Activated CD8-positive, alpha-beta memory T cell treated with anti-CD3 and anti-CD28 coated beads, Interleukin-2, amount 10 ng/mL, durations not matched to agents 7 days and 5 days (primary cell): ENCODE measurements at regions of chr13 and their contacts with region 1.

Region 1: DNA sequence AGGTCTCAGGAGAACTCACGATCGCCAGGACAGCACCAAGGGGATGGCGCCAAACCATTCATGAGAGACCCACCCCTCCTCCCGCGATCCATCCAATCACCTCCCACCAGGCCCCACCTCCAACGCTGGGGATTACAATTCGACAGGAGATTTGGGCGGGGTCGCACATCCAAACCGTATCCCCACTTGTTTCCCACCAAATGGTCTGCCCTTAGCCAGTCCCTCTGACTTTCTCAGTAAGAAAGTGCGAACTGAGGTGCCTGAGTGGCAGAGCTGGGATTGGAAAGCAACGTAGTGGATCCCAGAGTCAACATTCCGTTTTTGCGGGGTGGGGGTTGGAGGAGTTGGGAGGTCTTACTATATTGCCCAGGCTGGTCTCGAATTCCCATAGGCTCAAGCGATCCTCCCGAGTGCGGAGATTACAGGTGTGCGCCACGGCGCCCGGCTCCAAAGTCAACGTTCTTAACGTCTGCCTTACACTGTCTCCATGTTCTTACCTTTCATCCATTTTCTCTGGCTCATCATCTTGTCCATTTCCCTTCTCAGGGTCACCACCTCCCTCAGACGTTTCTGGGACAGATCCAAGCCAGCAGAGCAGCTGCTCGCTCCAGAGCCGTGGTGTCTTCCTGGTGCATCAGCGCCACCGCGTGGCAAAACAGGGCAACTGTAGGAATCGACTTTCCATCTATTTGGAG is 102.7 kb upstream of the ABCC4 start:
- DNase-seq: peak; percentile 80
- ATAC-seq: peak; percentile 94
- H3K4me3 Mint-ChIP-seq: peak overlapping the region; percentile 72
- H3K27ac Mint-ChIP-seq: no peak overlapping the region
- H3K4me1 Mint-ChIP-seq: peaks cover 5% of the 10 kb centered on the region
- H3K27me3 Mint-ChIP-seq: peaks cover 8% of the 10 kb centered on the region

Region 2: DNA sequence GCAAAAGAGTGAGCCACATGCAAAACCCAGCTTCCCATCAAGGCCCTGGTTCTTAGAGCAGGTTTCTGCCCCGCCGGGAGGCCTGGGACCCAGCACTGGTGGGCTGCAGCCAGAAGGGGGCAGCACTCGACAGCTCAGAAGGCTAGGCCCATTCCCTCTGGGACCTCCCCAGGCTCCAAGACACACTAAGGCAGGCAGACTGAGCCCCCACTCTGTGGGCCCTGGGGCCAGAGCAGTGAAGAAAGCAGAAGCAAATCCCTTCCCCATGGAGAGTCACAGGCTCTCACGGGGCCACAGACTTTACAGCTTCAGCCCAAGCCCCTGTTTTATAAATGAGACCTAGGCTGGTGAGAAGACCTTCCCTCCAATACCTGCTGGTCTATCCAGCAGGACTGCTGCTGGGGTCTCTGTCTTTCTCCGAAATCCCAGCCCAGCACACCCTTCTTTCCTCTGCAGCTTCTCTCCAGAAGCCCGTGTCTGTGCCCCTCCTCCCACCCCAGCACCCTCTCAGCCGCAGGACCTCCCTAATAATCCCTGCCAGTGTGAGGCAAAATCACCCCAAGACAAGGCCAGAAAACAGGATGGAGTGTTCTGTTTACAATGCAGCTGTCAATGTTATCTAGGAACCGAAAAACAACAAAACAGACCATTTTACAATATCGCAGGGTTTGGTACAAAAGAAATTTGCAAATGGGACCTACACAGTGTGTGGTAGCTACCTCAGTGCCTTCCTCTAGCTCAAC is 212.0 kb before region 1 on chr13:
- CTCF ChIA-PET with region 1: interaction called, 234 read pairs
- DNase-seq: peak; percentile 74
- ATAC-seq: peak; percentile 89
- H3K4me3 Mint-ChIP-seq: no peak overlapping the region
- H3K27ac Mint-ChIP-seq: no peak overlapping the region
- H3K4me1 Mint-ChIP-seq: peaks cover 8% of the 10 kb centered on the region
- H3K27me3 Mint-ChIP-seq: no peaks in the 10 kb centered on the region

Region 3: DNA sequence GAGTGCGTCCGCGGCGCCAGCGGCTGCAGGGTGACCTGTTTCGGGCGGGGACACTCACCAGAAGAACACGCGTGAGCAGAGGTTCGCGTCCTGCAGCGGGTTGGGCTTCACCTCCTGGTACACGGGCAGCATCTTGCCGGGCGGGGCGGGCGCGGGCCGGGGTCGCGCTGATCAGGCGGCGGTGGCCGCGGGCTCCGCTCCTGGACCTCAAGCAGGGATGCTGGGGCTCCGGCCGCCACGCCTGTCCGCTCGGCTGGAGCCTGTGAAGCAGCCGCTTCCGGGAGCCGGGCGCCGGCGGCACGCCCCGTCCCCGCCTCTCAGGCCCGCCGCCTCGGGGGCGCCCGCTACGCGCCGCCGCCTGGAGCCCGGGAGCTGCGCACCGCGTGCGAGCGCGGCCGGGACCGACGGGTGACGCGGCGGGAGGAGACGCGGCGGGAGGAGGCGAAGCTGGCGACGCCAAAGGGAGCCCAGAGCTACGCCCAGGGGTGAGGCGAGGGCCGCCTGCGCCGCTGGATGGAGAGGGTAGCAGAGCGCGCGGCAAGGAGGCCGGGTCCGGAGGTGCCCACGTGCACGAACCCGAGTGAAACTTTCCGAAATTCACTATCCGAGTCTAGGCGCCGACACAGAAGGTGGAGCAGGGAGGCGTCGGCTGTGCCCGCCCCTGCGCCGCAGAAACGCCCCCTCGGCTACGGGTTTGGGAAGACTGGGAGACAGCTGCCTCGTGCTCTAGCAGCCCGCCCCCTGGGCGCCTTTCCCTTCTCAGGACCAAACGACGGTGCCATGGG is 102.6 kb before region 1 on chr13 and contains the start of gene ABCC4:
- CTCF ChIA-PET with region 1: interaction called, 28 read pairs
- DNase-seq: peak; percentile 66
- ATAC-seq: peak; percentile 95
- H3K4me3 Mint-ChIP-seq: peak within 1 kb of the TSS; percentile 84
- H3K27ac Mint-ChIP-seq: no peak within 1 kb of the TSS
- H3K4me1 Mint-ChIP-seq: peaks cover 22% of the 10 kb centered on the region
- H3K27me3 Mint-ChIP-seq: peaks cover 12% of the 10 kb centered on the region
- total RNA-seq, gene ABCC4: 6.4 to 7.7 TPM

Region 4: GRCh38 chr13:95378603-95379002 is 25.4 kb before region 1 on chr13:
- CTCF ChIA-PET with region 1: interaction called, 29 read pairs
- DNase-seq: no peak
- ATAC-seq: no peak
- H3K4me3 Mint-ChIP-seq: no peak overlapping the region
- H3K27ac Mint-ChIP-seq: no peak overlapping the region
- H3K4me1 Mint-ChIP-seq: peaks cover 4% of the 10 kb centered on the region
- H3K27me3 Mint-ChIP-seq: peaks cover 7% of the 10 kb centered on the region

Region 5: DNA sequence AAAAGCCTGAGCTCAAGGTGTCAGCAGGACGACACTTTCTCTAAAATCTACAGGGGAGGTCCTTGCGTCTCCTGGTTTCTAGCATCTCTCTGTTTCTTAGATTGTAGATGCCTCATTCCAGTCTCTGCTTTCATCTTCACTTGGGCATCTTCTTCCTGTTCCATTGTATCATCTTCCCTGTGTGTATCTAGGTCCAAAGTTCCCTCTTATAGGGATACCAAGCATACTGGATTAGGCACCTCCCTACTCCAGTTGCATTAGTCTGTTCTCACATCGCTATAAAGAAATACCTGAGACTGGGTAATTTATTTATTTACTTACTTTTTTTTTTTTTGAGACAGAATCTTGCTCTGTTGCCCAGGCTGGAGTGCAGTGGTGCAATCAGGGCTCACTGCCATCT is 11.4 kb before region 1 on chr13:
- CTCF ChIA-PET with region 1: interaction called, 11 read pairs
- DNase-seq: no peak
- ATAC-seq: no peak
- H3K4me3 Mint-ChIP-seq: no peak overlapping the region
- H3K27ac Mint-ChIP-seq: no peak overlapping the region
- H3K4me1 Mint-ChIP-seq: no peaks in the 10 kb centered on the region
- H3K27me3 Mint-ChIP-seq: peaks cover 21% of the 10 kb centered on the region

Region 6: GRCh38 chr13:95420501-95420900 is 16.5 kb after region 1 on chr13:
- CTCF ChIA-PET with region 1: interaction called, 19 read pairs
- DNase-seq: no peak
- ATAC-seq: no peak
- H3K4me3 Mint-ChIP-seq: no peak overlapping the region
- H3K27ac Mint-ChIP-seq: no peak overlapping the region
- H3K4me1 Mint-ChIP-seq: peaks cover 6% of the 10 kb centered on the region
- H3K27me3 Mint-ChIP-seq: peaks cover 18% of the 10 kb centered on the region

Region 7: DNA sequence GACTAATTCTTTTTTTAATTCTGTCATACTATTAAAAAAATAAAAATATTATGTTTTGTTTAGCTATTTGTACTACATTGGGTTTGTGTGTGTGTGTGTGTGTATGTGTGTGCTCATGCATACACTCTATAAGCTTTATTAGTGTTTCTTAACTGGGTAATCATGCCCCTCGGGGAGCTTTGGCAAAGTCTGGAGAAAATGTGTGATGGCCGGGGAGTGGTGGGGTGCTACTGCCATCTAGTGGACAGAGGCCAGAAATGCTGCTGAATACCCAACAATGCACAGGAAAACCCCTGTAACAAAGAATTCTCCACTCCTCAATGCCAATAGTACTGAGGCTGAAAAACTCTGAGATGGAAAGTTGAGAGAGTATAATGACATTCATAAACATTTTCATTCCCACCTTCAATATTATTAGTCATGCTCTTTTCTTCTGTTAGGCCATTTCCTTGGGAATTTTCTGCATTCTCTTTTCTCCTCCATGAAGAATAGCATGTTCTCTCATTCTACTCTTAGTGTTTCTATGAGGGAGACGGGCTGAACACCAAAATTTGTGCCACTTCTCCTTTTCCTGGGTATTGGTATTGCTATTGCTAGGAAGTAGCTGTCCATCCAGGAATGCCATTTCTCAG is 430.3 kb after region 1 on chr13:
- CTCF ChIA-PET with region 1: interaction called, 11 read pairs
- DNase-seq: peak; percentile 68
- ATAC-seq: no peak
- H3K4me3 Mint-ChIP-seq: no peak overlapping the region
- H3K27ac Mint-ChIP-seq: no peak overlapping the region
- H3K4me1 Mint-ChIP-seq: no peaks in the 10 kb centered on the region
- H3K27me3 Mint-ChIP-seq: peaks cover 18% of the 10 kb centered on the region